ENCODE measurements at regions of chr3 and their contacts with region 1.

Region 1: GRCh38 chr3:126679318-126679751 is 24.4 kb upstream of the TXNRD3 start:
- DNase-seq: peak; percentile 94
- H3K4me3 ChIP-seq: peak overlapping the region in 1 of 2 donors; percentile 32
- H3K27ac ChIP-seq: no peak overlapping the region
- H3K4me1 ChIP-seq: peaks cover 29% of the 10 kb centered on the region
- H3K27me3 ChIP-seq: no peaks in the 10 kb centered on the region
- CTCF ChIP-seq: peak; percentile 92 to 99 (median 94)
- POLR2A ChIP-seq: no peak

Region 2: GRCh38 chr3:126982471-126983175 is 303.3 kb after region 1 on chr3 and contains the start of gene PLXNA1:
- intact Hi-C with region 1: loop called (anchors 10 kb)
- DNase-seq: peak; percentile 77
- H3K4me3 ChIP-seq: peak within 1 kb of the TSS; percentile 77 to 79
- H3K27ac ChIP-seq: peak within 1 kb of the TSS; percentile 39 to 66
- H3K4me1 ChIP-seq: peaks cover 20% of the 10 kb centered on the region
- H3K27me3 ChIP-seq: no peaks in the 10 kb centered on the region
- CTCF ChIP-seq: peak; percentile 85 to 87 (median 87)
- POLR2A ChIP-seq: no peak
- total RNA-seq, gene PLXNA1: 65.8 to 79.7 TPM

Region 3: DNA sequence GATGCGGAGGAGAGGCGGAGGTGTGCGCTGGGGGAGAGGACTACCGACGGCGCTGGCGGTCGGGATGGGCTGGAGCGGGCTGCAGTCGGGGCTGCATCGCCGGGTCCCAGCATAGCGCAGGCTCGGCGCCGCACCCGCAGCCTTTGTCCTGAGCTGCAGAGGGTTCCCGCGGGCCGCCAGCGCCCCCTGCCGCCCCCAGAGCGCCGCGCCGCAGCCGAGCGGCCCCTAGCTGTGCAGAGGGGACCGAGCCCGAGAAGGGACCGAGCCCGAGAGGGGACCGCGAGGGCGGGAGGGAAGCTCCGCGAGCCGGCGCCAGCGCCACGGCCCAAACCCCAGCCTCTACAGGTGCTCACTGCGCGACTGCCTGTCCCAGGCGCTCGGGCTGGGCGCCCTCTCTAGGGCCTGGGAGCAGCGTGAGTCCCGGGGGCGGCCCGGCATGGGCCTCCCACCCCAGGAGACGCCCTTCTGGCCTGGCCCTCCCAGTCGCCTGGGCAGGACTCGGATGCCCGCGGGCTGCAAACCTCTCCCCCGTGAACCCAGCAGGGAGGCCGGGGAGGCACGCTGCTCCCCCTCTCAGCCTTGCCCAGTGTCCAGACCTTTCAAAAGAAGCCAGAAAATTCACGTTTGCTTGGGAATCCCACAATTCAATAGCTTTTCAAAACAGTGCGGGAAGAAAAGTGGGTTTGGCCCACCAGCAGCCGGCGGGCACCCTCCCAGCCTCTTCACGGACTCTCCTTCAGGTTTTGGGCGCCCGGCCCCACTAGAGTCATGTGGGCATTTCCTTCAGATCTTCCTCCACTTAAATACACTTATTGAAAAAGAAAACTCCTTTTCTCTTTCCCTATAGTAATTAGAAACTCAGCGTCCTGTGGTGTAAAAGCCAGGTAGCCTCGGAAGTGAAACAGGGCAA is 776.5 kb after region 1 on chr3:
- intact Hi-C with region 1: loop called (anchors 10 kb)
- DNase-seq: peak; percentile 84
- H3K4me3 ChIP-seq: peak overlapping the region; percentile 21 to 31
- H3K27ac ChIP-seq: no peak overlapping the region
- H3K4me1 ChIP-seq: peaks cover 18% of the 10 kb centered on the region
- H3K27me3 ChIP-seq: no peaks in the 10 kb centered on the region
- CTCF ChIP-seq: peak; percentile 78 to 90 (median 82)
- POLR2A ChIP-seq: no peak

Region 4: GRCh38 chr3:127544192-127544802 is 865.0 kb after region 1 on chr3:
- intact Hi-C with region 1: loop called (anchors 10 kb)
- DNase-seq: peak; percentile 89
- H3K4me3 ChIP-seq: no peak overlapping the region
- H3K27ac ChIP-seq: no peak overlapping the region
- H3K4me1 ChIP-seq: peaks cover 14% of the 10 kb centered on the region
- H3K27me3 ChIP-seq: no peaks in the 10 kb centered on the region
- CTCF ChIP-seq: peak; percentile 62 to 79 (median 67)
- POLR2A ChIP-seq: no peak

Measured in testis (tissue), 5 donors.